Ascending aorta (tissue), 2 donors: ENCODE measurements at regions of chr12 and their contacts with region 1.

Region 1: GRCh38 chr12:54958048-54958658 is 26.4 kb downstream of the TESPA1 start:
- DNase-seq: no peak
- H3K4me3 ChIP-seq: no peak overlapping the region
- H3K27ac ChIP-seq: no peak overlapping the region
- H3K4me1 ChIP-seq: no peaks in the 10 kb centered on the region
- H3K27me3 ChIP-seq: no peaks in the 10 kb centered on the region
- CTCF ChIP-seq: peak in 2 of 3 experiments; percentile 37 to 55

Region 2: DNA sequence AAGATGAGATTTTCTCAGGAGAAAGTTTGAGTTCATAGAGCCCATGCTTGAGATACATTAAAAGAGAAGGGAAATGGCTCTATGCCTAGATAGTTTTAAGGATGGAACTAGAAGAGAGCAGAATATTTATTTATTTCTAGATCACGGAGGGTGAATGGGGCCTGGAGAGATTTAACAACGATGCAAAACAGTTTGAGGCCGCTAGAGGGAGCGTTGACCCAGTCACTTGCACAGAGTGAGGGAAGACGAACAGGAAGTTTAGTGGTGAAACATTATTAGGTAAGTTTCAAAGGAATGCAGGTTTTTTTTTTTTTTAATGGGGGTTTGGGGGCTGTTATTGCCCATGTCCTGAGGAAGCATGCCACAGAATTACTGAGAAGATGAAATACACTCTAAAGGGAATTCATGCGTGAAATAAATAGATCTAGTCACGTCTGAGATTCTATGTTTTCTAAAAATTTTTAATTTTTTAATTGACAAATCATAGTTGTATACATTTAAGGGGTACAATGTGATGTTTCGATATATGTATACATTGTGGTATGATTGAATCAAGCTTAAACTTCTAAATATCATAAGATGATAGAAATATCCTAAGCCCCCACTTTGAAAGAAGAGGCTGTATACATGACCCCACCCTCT is 354.9 kb before region 1 on chr12:
- intact Hi-C with region 1: loop called (anchors 2 kb)
- DNase-seq: peak in 1 of 2 donors; percentile 78
- H3K4me3 ChIP-seq: no peak overlapping the region
- H3K27ac ChIP-seq: no peak overlapping the region
- H3K4me1 ChIP-seq: no peaks in the 10 kb centered on the region
- H3K27me3 ChIP-seq: no peaks in the 10 kb centered on the region
- CTCF ChIP-seq: peak; percentile 37 to 83 (median 78)

Region 3: DNA sequence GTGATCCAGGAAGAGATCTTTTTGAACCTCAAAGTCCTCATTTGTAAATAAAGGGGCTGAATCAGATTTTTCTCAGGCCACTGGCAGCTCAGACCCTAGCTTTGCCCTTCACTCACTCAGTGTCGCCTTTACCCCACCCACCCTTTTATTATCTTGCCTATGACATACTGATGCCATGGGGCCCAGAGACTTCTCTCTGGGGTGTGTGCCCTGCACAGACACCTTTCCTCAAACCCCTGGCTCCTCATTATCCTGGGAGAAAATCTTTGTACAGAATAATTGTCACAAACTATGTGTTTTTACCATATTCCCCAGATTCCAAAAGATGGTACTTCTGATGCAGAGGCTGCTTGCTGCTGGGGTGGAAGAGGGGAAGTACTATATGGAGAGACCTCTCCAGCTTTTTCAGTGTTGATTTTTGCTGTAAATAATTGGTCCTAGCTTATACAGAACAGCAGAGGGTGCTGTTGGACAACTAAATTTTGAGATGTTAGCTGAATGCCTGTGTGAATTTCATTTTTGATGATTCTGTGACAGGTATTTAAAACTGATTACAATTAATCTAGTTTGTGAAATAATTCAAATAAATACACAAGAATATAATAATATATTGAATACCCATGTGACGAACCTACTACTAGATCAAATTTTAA is 256.1 kb before region 1 on chr12:
- intact Hi-C with region 1: loop called (anchors 5 kb)
- DNase-seq: no peak
- H3K4me3 ChIP-seq: no peak overlapping the region
- H3K27ac ChIP-seq: no peak overlapping the region
- H3K4me1 ChIP-seq: no peaks in the 10 kb centered on the region
- H3K27me3 ChIP-seq: no peaks in the 10 kb centered on the region
- CTCF ChIP-seq: peak; percentile 30 to 60 (median 48)

Region 4: DNA sequence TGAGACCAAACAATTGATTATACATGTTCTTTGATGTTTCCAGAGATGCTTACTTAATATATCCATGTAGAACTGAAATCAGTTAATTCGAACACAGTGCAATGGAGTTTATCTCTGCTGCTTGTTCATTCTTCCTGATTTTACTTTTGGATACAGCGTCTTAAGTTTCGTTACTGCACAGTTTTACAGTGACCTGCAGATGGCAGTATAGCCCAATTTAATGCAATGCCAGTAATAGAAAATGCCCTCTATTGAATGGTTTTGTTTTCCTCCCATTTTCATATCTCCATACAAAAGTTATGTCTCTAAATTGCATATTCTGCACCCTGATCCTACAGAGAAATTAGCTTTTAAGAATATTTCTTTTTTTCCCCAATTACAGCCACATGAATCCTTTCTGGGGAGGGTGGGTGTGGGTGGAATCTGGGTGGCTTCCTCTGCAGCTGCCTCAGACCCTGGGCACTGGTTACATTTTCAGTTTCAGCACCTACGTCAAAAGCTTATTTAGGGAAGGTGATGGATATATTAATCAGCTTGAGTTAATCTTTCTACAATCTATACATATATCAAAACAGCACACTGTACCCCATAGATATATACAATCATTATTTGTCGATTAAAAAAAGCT is 208.8 kb before region 1 on chr12:
- intact Hi-C with region 1: loop called (anchors 1 kb)
- DNase-seq: no peak
- H3K4me3 ChIP-seq: no peak overlapping the region
- H3K27ac ChIP-seq: no peak overlapping the region
- H3K4me1 ChIP-seq: no peaks in the 10 kb centered on the region
- H3K27me3 ChIP-seq: no peaks in the 10 kb centered on the region
- CTCF ChIP-seq: peak; percentile 39 to 60 (median 45)

Region 5: GRCh38 chr12:54879150-54879549 is 79.0 kb before region 1 on chr12:
- intact Hi-C with region 1: no loop called
- DNase-seq: no peak
- H3K4me3 ChIP-seq: no peak overlapping the region
- H3K27ac ChIP-seq: no peak overlapping the region
- H3K4me1 ChIP-seq: no peaks in the 10 kb centered on the region
- H3K27me3 ChIP-seq: no peaks in the 10 kb centered on the region
- CTCF ChIP-seq: no peak

Region 6: DNA sequence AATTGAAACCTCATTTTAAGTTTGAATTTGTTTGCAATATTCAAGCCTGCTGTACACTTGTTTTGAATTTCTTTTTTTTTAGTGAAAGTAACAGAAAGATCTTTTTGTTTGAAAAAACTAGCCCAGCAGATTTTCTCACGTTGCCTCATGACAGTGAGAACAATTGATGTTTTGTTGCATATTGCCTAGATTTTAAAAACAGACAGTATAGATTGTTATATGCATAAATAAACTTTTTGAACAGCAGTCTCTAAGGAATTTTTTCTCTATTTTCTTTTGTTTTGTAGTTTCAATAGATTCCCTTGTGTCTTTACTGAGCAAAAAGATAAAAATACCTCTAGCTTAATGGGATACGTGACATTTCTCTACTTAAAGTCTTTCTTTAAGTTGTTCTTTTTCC is 322.8 kb after region 1 on chr12:
- intact Hi-C with region 1: no loop called
- DNase-seq: no peak
- H3K4me3 ChIP-seq: no peak overlapping the region
- H3K27ac ChIP-seq: no peak overlapping the region
- H3K4me1 ChIP-seq: no peaks in the 10 kb centered on the region
- H3K27me3 ChIP-seq: no peaks in the 10 kb centered on the region
- CTCF ChIP-seq: no peak